ENCODE measurements at regions of chr7 and their contacts with region 1.

Region 1: GRCh38 chr7:2519119-2519930 is at the start of gene LFNG:
- DNase-seq: peak; percentile 88
- H3K4me3 Mint-ChIP-seq: peak within 1 kb of the TSS; percentile 91
- H3K27ac Mint-ChIP-seq: peak within 1 kb of the TSS; percentile 84
- H3K4me1 Mint-ChIP-seq: peaks cover 31% of the 10 kb centered on the region
- H3K27me3 Mint-ChIP-seq: peaks cover 10% of the 10 kb centered on the region
- total RNA-seq, gene LFNG: 105 to 109 TPM

Region 2: GRCh38 chr7:1842321-1843221 is 676.8 kb before region 1 on chr7:
- CTCF ChIA-PET with region 1: no interaction called
- POLR2A ChIA-PET with region 1: no interaction called
- DNase-seq: no peak
- H3K4me3 Mint-ChIP-seq: no peak overlapping the region
- H3K27ac Mint-ChIP-seq: no peak overlapping the region
- H3K4me1 Mint-ChIP-seq: no peaks in the 10 kb centered on the region
- H3K27me3 Mint-ChIP-seq: no peaks in the 10 kb centered on the region

Region 3: DNA sequence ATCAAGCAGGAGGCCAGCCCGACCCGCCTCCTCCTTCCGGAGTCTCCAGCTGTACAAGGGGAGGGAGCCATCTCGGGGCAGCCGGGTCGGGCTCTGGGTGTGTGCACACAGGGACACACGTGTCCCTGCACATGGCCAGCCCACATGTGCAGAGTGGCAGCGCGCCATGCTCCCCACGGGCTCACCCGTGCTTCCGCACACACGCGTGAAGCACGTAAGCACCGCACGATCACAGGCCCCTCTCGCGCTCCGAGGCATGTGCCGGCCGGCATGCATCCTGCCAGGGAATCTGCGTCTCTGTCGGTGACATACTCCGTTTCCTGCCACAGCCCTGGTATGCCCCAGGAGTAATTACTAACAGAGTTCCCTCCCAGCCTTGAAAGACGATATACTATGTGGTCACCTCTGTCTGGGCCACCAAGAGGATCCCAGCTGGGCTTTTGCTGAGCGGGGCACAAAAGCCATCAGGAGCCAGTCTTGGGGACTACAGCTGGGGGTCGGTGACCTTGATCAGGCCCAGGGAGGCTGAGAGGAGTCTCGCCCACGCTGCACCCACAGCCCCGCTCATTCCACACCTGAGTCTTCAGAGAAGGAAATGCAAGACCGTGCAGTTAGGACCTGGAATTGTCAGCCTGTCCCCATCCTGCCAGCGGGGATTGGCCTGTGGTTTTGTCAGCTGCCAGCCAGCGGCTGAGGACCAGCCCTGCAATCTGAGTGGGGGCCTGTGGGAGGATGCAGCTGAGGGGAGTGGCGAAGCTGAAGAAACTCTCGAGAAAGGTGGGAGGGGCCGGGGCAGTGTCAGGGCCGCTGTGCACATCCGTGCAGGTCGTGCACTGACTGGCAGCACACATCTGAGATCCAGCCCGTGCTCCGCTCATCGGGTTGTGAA is 10.8 kb before region 1 on chr7:
- CTCF ChIA-PET with region 1: interaction called, 5 read pairs
- POLR2A ChIA-PET with region 1: interaction called, 80 read pairs
- DNase-seq: peak; percentile 85
- H3K4me3 Mint-ChIP-seq: peak overlapping the region; percentile 67
- H3K27ac Mint-ChIP-seq: peak overlapping the region; percentile 87
- H3K4me1 Mint-ChIP-seq: peaks cover 57% of the 10 kb centered on the region
- H3K27me3 Mint-ChIP-seq: no peaks in the 10 kb centered on the region

Region 4: GRCh38 chr7:2529161-2530070 is 10.1 kb after region 1 on chr7:
- CTCF ChIA-PET with region 1: interaction called, 3 read pairs
- POLR2A ChIA-PET with region 1: interaction called, 30 read pairs
- DNase-seq: peak; percentile 70
- H3K4me3 Mint-ChIP-seq: peak overlapping the region; percentile 69
- H3K27ac Mint-ChIP-seq: peak overlapping the region; percentile 96
- H3K4me1 Mint-ChIP-seq: peaks cover 64% of the 10 kb centered on the region
- H3K27me3 Mint-ChIP-seq: no peaks in the 10 kb centered on the region

Region 5: DNA sequence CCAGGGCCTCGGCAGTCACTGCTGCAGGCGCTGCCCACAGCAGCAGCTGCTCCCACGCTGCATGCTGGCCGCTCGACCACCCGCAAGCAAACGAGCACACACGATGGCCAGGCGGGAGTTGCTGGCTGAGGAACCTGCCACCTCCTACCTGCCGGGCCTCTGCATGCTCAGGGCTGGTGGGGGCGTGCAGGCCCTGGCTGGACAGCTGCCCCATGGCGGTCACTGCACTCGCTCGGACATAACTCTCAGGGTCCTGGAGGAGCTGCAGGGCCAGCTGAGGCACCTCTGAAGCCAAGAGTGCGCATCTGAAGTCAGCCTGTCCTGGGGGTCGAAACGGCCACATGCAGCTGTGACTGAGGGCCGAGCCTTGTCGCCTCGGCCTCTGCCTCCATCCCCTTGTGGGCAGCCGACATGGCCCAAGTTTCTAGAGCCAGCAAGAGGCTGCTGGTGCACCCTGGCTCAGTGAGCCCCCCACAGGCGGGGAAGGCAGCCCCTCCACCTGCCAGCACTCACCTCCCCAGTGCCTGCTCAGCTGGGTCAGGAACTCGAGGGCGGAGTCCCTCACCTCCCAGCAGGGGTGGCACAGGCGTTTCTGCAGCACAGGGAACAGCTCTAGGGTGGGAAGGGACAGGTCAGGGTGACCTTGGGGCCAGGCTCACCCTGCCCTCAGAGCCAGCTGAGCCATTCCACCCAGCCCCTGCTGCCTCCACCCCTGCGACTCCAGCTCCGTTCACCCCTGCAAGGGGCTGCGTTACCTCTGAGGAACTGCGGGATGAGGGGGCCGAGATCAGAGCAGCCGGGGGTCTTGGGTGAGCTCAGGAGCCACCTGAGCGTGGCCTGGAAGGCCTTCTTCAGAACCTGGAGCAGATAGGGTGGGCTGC is 19.9 kb after region 1 on chr7:
- CTCF ChIA-PET with region 1: no interaction called
- POLR2A ChIA-PET with region 1: interaction called, 10 read pairs
- DNase-seq: no peak
- H3K4me3 Mint-ChIP-seq: no peak overlapping the region
- H3K27ac Mint-ChIP-seq: no peak overlapping the region
- H3K4me1 Mint-ChIP-seq: no peaks in the 10 kb centered on the region
- H3K27me3 Mint-ChIP-seq: no peaks in the 10 kb centered on the region

Region 6: DNA sequence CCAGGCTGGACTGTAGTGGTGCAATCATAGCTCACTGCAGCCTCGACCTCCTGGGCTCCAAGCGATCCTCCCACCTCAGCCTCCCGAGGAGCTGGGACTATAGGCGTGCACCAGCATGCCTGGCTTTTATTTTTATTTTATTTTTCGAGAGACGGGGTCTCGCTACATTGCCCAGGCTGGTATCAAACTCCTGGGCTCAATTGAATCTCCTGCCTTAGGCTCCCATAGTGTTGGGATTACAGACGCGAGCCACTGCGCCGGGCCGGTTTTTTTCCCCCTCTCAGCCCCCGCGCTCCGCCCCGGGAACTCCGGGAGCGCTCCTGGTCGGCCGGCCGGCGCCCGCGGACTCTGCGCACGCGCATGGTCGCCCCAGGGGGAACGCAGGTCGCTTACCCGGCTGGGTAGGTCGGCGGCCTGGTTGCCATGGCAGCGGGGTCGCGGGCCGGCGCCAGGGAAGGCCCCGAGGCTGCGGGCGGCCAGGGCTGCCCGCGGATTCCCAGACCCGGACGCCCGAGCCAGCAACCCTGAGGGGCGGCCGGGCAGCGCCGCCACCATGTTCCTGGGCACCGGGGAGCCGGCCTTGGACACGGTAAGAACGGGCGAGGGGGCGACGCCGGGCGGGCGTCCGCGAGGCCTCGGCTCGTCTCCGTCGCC is 39.4 kb after region 1 on chr7 and contains the start of gene IQCE:
- CTCF ChIA-PET with region 1: no interaction called
- POLR2A ChIA-PET with region 1: interaction called, 10 read pairs
- DNase-seq: peak; percentile 93
- H3K4me3 Mint-ChIP-seq: peak within 1 kb of the TSS; percentile 76
- H3K27ac Mint-ChIP-seq: peak within 1 kb of the TSS; percentile 49
- H3K4me1 Mint-ChIP-seq: peaks cover 40% of the 10 kb centered on the region
- H3K27me3 Mint-ChIP-seq: peaks cover 2% of the 10 kb centered on the region
- total RNA-seq, gene IQCE: 12.7 to 14.0 TPM

Measured in activated CD4-positive, alpha-beta memory T cell treated with anti-CD3 and anti-CD28 coated beads, Interleukin-2, amount 10 ng/mL, durations not matched to agents 7 days and 5 days (primary cell).